B cell (primary cell): ENCODE measurements at regions of chr16 and their contacts with region 1.

Region 1: DNA sequence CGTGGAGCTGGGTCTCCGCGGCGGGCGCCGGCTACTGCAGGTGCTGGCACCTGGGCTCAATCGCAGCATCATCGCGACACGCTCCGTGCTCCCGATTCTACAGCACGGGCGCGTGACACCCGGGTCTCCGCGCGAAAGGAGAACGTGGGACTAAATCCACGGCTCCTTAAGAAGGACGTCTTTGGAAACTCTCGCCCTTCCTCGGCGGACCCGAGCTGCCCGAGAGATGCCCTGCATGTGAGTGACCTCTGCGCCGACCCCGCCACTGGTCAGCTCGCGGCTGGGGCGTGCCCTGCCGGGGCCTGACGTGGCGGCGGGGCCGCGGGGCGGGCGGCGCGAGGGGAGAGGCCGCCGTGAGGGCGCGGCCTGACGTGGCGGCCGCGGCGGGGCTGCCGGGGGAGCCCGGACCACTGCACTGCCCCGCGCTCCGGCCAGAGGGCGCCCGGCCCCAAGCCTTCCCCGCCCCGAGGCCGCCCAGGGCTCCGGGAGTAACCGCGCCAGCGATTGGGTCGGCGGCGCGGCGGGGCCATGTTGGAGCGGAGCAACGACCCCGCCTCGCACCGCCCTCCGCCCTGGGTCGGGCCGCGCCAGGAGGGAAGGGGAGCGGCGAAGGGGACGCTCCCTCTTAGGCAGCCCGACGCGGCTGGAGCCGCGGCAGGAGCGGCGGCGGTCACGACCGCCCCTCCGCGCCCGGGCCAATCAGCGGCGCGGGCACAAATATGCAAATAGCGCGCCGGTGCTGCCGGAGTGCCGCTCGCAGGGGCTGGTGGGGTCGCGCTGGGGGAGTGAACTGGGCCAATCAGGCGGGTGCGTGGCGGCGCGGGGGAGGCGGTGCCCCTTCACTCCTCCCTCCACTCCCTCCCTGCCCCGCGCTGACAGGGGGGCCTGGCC is 75.6 kb downstream of the CHD9 start:
- DNase-seq: peak; percentile 97
- ATAC-seq: peak; percentile 83
- H3K4me3 ChIP-seq: peak overlapping the region; percentile 58 to 73 (median 70)
- H3K4me3 Mint-ChIP-seq: peak overlapping the region; percentile 89
- H3K27ac ChIP-seq: peak overlapping the region; percentile 72 to 97
- H3K27ac Mint-ChIP-seq: peak overlapping the region; percentile 90
- H3K4me1 ChIP-seq: peaks cover 7 to 24% of the 10 kb centered on the region in 2 donors
- H3K4me1 Mint-ChIP-seq: peaks cover 39% of the 10 kb centered on the region
- H3K27me3 ChIP-seq: no peaks in the 10 kb centered on the region
- H3K27me3 Mint-ChIP-seq: no peaks in the 10 kb centered on the region
- CTCF ChIP-seq: peak; percentile 65

Region 2: DNA sequence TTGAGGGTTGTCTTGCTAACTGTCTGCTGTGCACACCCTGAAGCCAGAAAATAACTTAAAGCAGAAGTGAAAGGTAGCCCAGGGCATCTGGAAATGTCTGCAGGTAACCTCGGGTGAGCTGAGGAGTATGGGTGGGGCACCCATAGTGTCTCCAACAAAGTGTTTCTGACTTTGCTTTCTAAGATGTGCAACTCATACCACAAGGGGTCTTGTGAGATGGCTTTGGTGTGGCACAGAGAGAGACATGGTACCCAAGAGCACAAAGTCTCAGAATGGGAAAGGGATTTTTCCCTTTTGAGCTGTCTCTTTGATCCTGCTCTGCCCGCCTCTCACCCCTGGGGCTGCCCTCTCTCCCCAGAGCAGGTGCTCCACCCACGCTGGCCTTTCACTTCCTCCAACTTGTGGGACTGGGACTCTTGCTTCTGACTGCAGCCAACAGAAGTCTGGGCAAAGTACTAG is 68.7 kb before region 1 on chr16:
- CTCF ChIA-PET with region 1: interaction called, 43 read pairs
- POLR2A ChIA-PET with region 1: interaction called, 3 read pairs
- intact Hi-C with region 1: loop called (anchors 1 kb)
- DNase-seq: peak; percentile 89
- ATAC-seq: peak; percentile 83
- H3K4me3 ChIP-seq: peak overlapping the region in 4 of 5 experiments; percentile 23 to 62 (median 38)
- H3K4me3 Mint-ChIP-seq: peak overlapping the region; percentile 85
- H3K27ac ChIP-seq: peak overlapping the region; percentile 72 to 93
- H3K27ac Mint-ChIP-seq: peak overlapping the region; percentile 95
- H3K4me1 ChIP-seq: peaks cover 78 to 100% of the 10 kb centered on the region in 2 donors
- H3K4me1 Mint-ChIP-seq: peaks cover 76% of the 10 kb centered on the region
- H3K27me3 ChIP-seq: no peaks in the 10 kb centered on the region
- H3K27me3 Mint-ChIP-seq: no peaks in the 10 kb centered on the region
- CTCF ChIP-seq: peak; percentile 19

Region 3: DNA sequence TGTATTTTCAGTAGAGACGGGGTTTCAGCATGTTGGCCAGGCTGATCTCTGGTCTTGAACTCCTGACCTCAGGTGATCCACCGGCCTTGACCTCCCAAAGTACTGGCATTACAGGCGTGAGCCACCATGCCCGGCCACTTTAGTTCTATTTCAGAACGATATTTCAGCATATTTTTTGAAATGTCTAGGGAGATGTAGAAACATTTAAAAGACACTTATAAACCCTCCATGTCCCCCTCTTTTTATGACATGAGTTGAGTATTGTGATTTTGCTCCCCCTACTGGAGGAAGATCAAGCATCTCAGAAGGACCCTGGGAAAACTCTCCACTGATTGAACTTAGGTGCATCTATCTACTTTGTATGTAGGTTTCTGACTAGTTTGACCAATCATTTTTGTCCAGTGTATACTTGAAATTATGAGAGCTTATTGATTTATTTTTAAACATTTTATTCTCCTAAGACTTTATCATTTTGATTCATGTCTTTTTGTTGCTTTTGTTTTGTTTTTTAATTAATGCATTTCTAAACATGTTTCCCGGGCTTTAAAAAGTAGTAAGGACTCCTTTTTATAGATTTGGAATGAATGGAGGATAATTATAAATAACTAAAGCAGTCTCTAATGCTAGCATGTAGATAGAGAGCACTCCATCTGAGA is 29.5 kb after region 1 on chr16:
- CTCF ChIA-PET with region 1: interaction called, 3 read pairs
- POLR2A ChIA-PET with region 1: no interaction called
- intact Hi-C with region 1: loop called (anchors 1 kb)
- DNase-seq: peak; percentile 77
- ATAC-seq: peak; percentile 77
- H3K4me3 ChIP-seq: no peak overlapping the region
- H3K4me3 Mint-ChIP-seq: no peak overlapping the region
- H3K27ac ChIP-seq: no peak overlapping the region
- H3K27ac Mint-ChIP-seq: no peak overlapping the region
- H3K4me1 ChIP-seq: no peaks in the 10 kb centered on the region
- H3K4me1 Mint-ChIP-seq: no peaks in the 10 kb centered on the region
- H3K27me3 ChIP-seq: no peaks in the 10 kb centered on the region
- H3K27me3 Mint-ChIP-seq: no peaks in the 10 kb centered on the region
- CTCF ChIP-seq: peak; percentile 85

Region 4: GRCh38 chr16:53266156-53266555 is 135.8 kb after region 1 on chr16:
- CTCF ChIA-PET with region 1: no interaction called
- POLR2A ChIA-PET with region 1: no interaction called
- intact Hi-C with region 1: no loop called
- DNase-seq: no peak
- ATAC-seq: no peak
- H3K4me3 ChIP-seq: no peak overlapping the region
- H3K4me3 Mint-ChIP-seq: no peak overlapping the region
- H3K27ac ChIP-seq: no peak overlapping the region
- H3K27ac Mint-ChIP-seq: no peak overlapping the region
- H3K4me1 ChIP-seq: no peaks in the 10 kb centered on the region
- H3K4me1 Mint-ChIP-seq: no peaks in the 10 kb centered on the region
- H3K27me3 ChIP-seq: no peaks in the 10 kb centered on the region
- H3K27me3 Mint-ChIP-seq: no peaks in the 10 kb centered on the region
- CTCF ChIP-seq: no peak

Region 5: GRCh38 chr16:53435066-53435688 is 304.8 kb after region 1 on chr16:
- CTCF ChIA-PET with region 1: no interaction called
- POLR2A ChIA-PET with region 1: no interaction called
- intact Hi-C with region 1: loop called (anchors 1 kb)
- DNase-seq: peak; percentile 84
- ATAC-seq: peak; percentile 75
- H3K4me3 ChIP-seq: peak overlapping the region; percentile 76 to 99 (median 98)
- H3K4me3 Mint-ChIP-seq: peak overlapping the region; percentile 93
- H3K27ac ChIP-seq: peak overlapping the region; percentile 83 to 90
- H3K27ac Mint-ChIP-seq: peak overlapping the region; percentile 95
- H3K4me1 ChIP-seq: peaks cover 15 to 16% of the 10 kb centered on the region in 2 donors
- H3K4me1 Mint-ChIP-seq: peaks cover 27% of the 10 kb centered on the region
- H3K27me3 ChIP-seq: peaks cover 0 to under 1% (median 0%) of the 10 kb centered on the region in 4 experiments
- H3K27me3 Mint-ChIP-seq: peaks cover 2% of the 10 kb centered on the region
- CTCF ChIP-seq: no peak

Region 6: GRCh38 chr16:53509906-53510703 is 379.7 kb after region 1 on chr16:
- CTCF ChIA-PET with region 1: no interaction called
- POLR2A ChIA-PET with region 1: no interaction called
- intact Hi-C with region 1: loop called (anchors 2 kb)
- DNase-seq: peak; percentile 78
- ATAC-seq: peak; percentile 78
- H3K4me3 ChIP-seq: peak overlapping the region in 4 of 5 experiments; percentile 15 to 39 (median 27)
- H3K4me3 Mint-ChIP-seq: peak overlapping the region; percentile 71
- H3K27ac ChIP-seq: no peak overlapping the region
- H3K27ac Mint-ChIP-seq: peak overlapping the region; percentile 41
- H3K4me1 ChIP-seq: peaks cover 10 to 13% of the 10 kb centered on the region in 2 donors
- H3K4me1 Mint-ChIP-seq: peaks cover 19% of the 10 kb centered on the region
- H3K27me3 ChIP-seq: no peaks in the 10 kb centered on the region
- H3K27me3 Mint-ChIP-seq: no peaks in the 10 kb centered on the region
- CTCF ChIP-seq: peak; percentile 99